Activated CD4-positive, alpha-beta memory T cell treated with anti-CD3 and anti-CD28 coated beads, Interleukin-2, amount 10 ng/mL, durations not matched to agents 7 days and 5 days (primary cell): ENCODE measurements at regions of chr21 and their contacts with region 1.

Region 1: DNA sequence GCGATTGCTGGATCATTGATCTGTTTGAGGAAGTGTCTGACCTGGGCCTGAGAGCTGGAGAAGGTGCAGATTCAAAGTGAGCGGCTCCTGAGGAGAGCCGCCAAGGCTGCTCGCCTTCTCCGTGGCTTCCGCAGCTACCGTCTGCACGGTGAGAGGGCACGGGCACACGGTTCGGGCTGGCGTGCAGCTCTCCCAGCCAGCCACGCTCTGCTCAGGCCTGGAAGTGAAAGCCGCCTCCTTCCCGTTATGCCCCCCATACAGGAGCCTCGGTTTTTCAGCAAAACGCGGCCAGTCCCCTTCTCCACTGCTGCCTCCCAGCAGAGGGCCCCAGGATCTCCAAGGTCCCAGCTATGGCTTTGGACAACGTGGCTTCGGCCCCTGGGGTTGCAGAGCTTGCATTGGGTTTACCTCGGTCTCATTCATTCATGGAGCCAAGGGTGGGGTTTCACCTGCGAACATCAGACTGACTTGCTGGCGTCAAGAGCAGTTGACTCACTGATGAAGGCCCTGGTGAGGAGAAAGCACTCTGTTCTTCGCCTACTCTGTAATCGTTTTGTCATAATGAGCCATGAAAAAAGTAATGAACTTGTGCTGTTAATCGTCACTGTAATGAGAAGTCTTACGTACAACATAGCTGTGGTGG is 24.4 kb upstream of the PDXK start:
- DNase-seq: no peak
- H3K4me3 Mint-ChIP-seq: no peak overlapping the region
- H3K27ac Mint-ChIP-seq: no peak overlapping the region
- H3K4me1 Mint-ChIP-seq: no peaks in the 10 kb centered on the region
- H3K27me3 Mint-ChIP-seq: no peaks in the 10 kb centered on the region

Region 2: GRCh38 chr21:43684424-43684823 is 10.1 kb before region 1 on chr21:
- CTCF ChIA-PET with region 1: no interaction called
- POLR2A ChIA-PET with region 1: interaction called, 11 read pairs
- DNase-seq: peak; percentile 40
- H3K4me3 Mint-ChIP-seq: peak overlapping the region; percentile 6
- H3K27ac Mint-ChIP-seq: peak overlapping the region; percentile 89
- H3K4me1 Mint-ChIP-seq: peaks cover 27% of the 10 kb centered on the region
- H3K27me3 Mint-ChIP-seq: no peaks in the 10 kb centered on the region